Heart right ventricle (tissue), 16 donors: ENCODE measurements at regions of chr1 and their contacts with region 1.

Region 1: DNA sequence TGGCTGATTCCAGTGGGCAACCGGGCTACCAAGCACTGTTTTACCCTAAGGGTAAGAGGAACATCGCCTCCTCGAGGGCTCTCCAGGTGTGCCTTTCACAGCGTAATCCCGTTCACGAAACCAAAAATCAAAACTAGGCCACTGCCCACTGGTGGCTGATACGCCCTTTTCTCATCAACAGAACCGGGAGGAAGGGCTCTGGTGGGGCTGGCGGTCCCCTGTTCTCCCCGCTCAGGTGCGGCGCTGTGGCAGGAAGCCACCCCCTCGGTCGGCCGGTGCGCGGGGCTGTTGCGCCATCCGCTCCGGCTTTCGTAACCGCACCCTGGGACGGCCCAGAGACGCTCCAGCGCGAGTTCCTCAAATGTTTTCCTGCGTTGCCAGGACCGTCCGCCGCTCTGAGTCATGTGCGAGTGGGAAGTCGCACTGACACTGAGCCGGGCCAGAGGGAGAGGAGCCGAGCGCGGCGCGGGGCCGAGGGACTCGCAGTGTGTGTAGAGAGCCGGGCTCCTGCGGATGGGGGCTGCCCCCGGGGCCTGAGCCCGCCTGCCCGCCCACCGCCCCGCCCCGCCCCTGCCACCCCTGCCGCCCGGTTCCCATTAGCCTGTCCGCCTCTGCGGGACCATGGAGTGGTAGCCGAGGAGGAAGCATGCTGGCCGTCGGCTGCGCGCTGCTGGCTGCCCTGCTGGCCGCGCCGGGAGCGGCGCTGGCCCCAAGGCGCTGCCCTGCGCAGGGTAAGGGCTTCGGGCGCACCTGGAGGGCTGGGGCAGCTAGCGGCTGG is at the start of gene IL6R:
- DNase-seq: peak; percentile 91
- ATAC-seq: peak; percentile 82 to 93 (median 88)
- H3K4me3 ChIP-seq: peak within 1 kb of the TSS; percentile 53 to 78 (median 69)
- H3K27ac ChIP-seq: peak within 1 kb of the TSS; percentile 78 to 96 (median 94)
- H3K4me1 ChIP-seq: peaks cover 3 to 92% (median 43%) of the 10 kb centered on the region in 9 donors
- H3K27me3 ChIP-seq: no peaks in the 10 kb centered on the region
- CTCF ChIP-seq: peak; percentile 35 to 76 (median 52)
- total RNA-seq, gene IL6R: 6.1 to 16.2 (median 10.0) TPM

Region 2: DNA sequence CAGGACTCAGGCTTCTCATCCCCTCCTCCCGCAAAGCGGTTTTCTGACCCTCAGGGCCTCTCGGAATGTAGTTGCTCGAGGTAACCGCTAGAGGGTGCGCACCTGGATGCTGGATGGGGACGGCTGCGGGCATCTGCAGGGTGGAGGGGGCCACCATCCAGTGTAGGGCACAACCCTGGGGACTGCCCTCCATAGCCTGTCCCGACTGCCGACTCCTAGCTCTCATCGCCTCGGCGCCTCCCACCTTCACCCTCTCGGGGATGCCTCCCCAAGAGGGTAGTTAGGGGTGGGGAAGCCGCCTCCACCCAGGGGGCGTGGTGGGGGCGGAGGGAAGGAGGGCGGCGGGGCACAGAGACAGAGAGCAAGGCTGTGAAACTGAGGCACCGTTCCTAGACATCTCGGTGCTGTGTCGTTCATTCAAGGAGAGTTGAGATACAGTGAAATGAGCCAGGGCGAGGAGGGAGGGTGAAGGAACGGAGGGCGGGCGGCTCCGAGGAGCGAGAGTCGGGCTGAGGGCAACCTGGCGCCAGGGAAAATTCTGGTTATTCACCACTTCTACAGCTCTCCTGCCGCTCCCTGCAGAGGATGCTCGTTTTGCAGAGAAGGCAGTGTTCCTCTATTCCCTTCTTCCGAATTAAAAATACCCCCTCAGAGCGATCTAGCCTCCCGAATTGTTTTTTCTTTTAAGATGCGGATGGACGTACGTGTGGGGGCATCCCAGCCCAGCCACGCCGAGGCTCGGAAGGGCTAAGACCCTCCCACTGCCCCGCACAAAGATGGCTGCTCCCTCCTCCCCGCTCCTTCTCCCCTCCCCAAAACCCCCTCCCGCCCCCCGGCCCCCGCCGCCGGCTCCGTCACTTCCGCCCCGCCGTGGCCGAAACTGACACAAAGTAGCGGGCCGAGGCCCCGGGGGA is 80.2 kb before region 1 on chr1 and contains the start of gene ATP8B2:
- intact Hi-C with region 1: loop called in 1 of 10 experiments (anchors 5 kb)
- DNase-seq: peak; percentile 74 to 80
- ATAC-seq: peak; percentile 37 to 78 (median 59)
- H3K4me3 ChIP-seq: peak within 1 kb of the TSS; percentile 69 to 89 (median 78)
- H3K27ac ChIP-seq: peak within 1 kb of the TSS; percentile 53 to 94 (median 92)
- H3K4me1 ChIP-seq: peaks cover 19 to 61% (median 48%) of the 10 kb centered on the region in 9 donors
- H3K27me3 ChIP-seq: peaks cover 0 to 33% (median 0%) of the 10 kb centered on the region in 7 donors
- CTCF ChIP-seq: peak; percentile 86 to 96 (median 94)
- total RNA-seq, gene ATP8B2: 10.3 to 17.3 (median 13.3) TPM

Region 3: GRCh38 chr1:154352581-154353459 is 52.4 kb before region 1 on chr1:
- intact Hi-C with region 1: loop called in 2 of 10 experiments (anchors 5 kb)
- DNase-seq: peak; percentile 53 to 54
- ATAC-seq: peak; percentile 44 to 72 (median 66)
- H3K4me3 ChIP-seq: peak overlapping the region; percentile 29 to 56 (median 50)
- H3K27ac ChIP-seq: peak overlapping the region in 9 of 10 donors; percentile 22 to 75 (median 50)
- H3K4me1 ChIP-seq: peaks cover 4 to 28% (median 15%) of the 10 kb centered on the region in 9 donors
- H3K27me3 ChIP-seq: peaks cover 0 to 14% (median 0%) of the 10 kb centered on the region in 7 donors
- CTCF ChIP-seq: no peak

Region 4: GRCh38 chr1:154442006-154442740 is 37.0 kb after region 1 on chr1:
- intact Hi-C with region 1: loop called in 4 of 10 experiments (anchors 2 to 5 kb)
- DNase-seq: no peak
- ATAC-seq: peak in 5 of 8 donors; percentile 45 to 69 (median 52)
- H3K4me3 ChIP-seq: no peak overlapping the region
- H3K27ac ChIP-seq: peak overlapping the region in 1 of 10 donors; percentile 7
- H3K4me1 ChIP-seq: peaks cover 0 to 39% (median 0%) of the 10 kb centered on the region in 9 donors
- H3K27me3 ChIP-seq: no peaks in the 10 kb centered on the region
- CTCF ChIP-seq: peak in 8 of 9 donors; percentile 21 to 54 (median 42)

Region 5: GRCh38 chr1:154463512-154463990 is 58.4 kb after region 1 on chr1:
- intact Hi-C with region 1: loop called in 3 of 10 experiments (anchors 5 to 10 kb)
- DNase-seq: no peak
- ATAC-seq: peak in 6 of 8 donors; percentile 25 to 63 (median 43)
- H3K4me3 ChIP-seq: no peak overlapping the region
- H3K27ac ChIP-seq: peak overlapping the region in 3 of 10 donors; percentile 15 to 79 (median 62)
- H3K4me1 ChIP-seq: peaks cover 0 to 56% (median 4%) of the 10 kb centered on the region in 9 donors
- H3K27me3 ChIP-seq: no peaks in the 10 kb centered on the region
- CTCF ChIP-seq: no peak

Region 6: DNA sequence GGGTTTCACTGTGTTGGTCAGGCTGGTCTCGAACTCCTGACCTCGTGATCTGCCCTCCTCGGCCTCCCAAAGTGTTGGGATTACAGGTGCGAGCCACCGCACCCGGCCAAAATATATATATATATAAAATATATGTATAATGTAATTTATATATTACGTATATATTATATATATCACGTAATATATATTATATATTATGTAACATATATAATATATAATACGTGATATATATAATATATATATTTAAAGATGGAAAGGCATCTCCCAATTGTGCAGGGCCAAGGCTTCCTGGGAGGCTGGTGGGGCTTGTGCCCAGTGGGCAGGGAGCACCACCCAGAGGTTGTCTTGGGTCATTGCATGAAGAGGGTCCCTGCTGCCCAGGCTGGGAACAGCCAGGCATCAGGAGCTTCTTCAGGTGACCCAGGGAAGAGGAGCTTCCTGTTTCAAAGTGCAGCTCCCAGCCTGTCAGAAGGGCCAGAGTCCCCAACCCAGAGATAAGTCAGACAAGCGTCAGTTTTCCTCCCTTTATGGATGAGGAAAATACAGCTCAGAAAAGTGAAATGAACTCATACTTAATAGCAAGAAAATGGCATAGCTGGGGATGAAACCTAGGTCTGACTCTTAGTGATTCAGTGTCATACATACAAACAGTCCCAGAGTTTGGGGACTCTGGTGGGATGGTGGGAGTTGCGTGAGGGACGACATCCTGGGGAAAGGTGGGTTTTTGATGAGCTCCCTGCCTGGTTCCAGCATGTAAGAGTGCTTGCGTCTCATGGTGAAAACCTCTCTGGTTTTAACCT is 141.3 kb after region 1 on chr1:
- intact Hi-C with region 1: loop called in 2 of 10 experiments (anchors 5 to 10 kb)
- DNase-seq: peak; percentile 49 to 51
- ATAC-seq: peak in 6 of 8 donors; percentile 70 to 80 (median 74)
- H3K4me3 ChIP-seq: no peak overlapping the region
- H3K27ac ChIP-seq: no peak overlapping the region
- H3K4me1 ChIP-seq: peaks cover 0 to 34% (median 19%) of the 10 kb centered on the region in 9 donors
- H3K27me3 ChIP-seq: no peaks in the 10 kb centered on the region
- CTCF ChIP-seq: peak; percentile 67 to 86 (median 83)